Endothelial cell of umbilical vein (primary cell): ENCODE measurements at regions of chr2 and their contacts with region 1.

Region 1: DNA sequence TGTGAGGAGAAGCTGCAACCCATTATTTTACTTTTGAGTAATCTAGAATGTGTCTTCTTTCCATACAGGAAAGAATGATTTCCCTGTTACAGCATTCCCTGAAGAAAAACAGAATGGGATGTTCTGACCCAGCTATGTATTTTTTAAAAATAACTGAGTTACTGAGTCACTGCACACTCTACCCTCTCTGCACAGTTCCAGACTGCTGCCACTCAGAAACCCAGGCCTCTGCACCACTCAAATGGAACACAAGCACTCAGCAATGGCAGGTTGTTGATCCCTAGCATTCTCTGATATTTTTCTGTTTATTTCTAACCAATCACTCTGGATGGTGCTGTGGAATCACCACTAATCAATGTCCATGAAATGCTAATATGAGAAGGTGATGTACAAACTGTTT is 1300.0 kb upstream of the FAM98A start:
- DNase-seq: no peak
- H3K4me3 ChIP-seq: no peak overlapping the region
- H3K27ac ChIP-seq: no peak overlapping the region
- H3K4me1 ChIP-seq: no peaks in the 10 kb centered on the region
- H3K27me3 ChIP-seq: no peaks in the 10 kb centered on the region
- CTCF ChIP-seq: no peak
- POLR2A ChIP-seq: no peak

Region 2: DNA sequence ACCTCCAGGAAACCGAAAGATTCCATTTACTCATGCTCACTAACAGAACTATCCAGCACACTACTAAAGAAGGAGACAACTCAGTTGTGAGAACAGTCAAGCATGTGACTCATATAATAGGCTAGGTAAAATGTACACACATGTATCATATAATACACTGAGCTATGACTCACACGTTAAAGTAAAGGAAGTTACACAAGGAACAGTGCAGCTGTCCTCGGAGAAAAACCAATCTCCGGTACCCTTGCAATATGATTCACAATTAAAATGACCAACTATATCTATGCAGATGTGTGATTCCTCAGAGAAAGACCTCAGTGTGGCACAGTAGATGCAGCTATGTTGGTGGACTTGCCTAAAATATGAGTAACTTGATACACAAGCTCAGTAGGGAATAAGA is 1990.7 kb after region 1 on chr2:
- CTCF ChIA-PET with region 1: no interaction called
- POLR2A ChIA-PET with region 1: interaction called, 13 read pairs
- dilution Hi-C with region 1: no loop called
- intact Hi-C with region 1: no loop called
- DNase-seq: peak; percentile 95
- H3K4me3 ChIP-seq: no peak overlapping the region
- H3K27ac ChIP-seq: peak overlapping the region; percentile 61
- H3K4me1 ChIP-seq: peaks cover 5% of the 10 kb centered on the region
- H3K27me3 ChIP-seq: no peaks in the 10 kb centered on the region
- CTCF ChIP-seq: no peak
- POLR2A ChIP-seq: no peak